PC-9 (cell line): ENCODE measurements at regions of chr6 and their contacts with region 1.

Region 1: DNA sequence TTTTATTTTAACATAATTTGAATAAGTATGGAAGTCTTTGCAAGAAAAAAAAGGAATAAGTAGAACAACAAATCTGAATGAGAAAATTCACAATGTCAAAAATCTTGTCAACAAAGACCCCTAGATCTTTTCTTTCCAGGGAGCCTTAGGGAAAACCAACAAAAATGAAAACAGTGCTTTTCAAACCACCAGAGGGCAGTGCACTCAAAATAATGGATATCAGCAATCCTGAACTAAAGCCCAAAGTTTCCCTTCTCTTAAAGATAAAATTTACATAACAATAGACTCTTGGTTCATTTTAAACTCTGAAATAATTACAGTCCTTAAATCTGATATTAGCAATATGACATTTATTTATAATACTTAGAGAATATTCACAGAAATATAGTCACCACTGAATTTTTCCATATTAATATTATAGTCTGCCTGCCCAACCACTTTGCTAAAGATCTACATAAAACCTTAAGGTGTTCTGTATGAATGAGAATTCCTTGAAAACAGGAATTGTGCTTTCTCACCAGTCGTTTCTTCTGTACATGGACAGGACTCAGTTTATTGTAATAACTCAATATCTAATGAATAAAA is 105.3 kb upstream of the BMP5 start:
- DNase-seq: peak in 1 of 2 experiments; percentile 24
- H3K4me3 ChIP-seq: no peak overlapping the region
- H3K27ac ChIP-seq: no peak overlapping the region
- H3K4me1 ChIP-seq: no peaks in the 10 kb centered on the region
- H3K27me3 ChIP-seq: no peaks in the 10 kb centered on the region
- CTCF ChIP-seq: peak; percentile 89

Region 2: GRCh38 chr6:55941702-55942101 is 39.0 kb before region 1 on chr6:
- CTCF ChIA-PET with region 1: no interaction called
- POLR2A ChIA-PET with region 1: no interaction called
- intact Hi-C with region 1: no loop called
- DNase-seq: no peak
- H3K4me3 ChIP-seq: no peak overlapping the region
- H3K27ac ChIP-seq: no peak overlapping the region
- H3K4me1 ChIP-seq: no peaks in the 10 kb centered on the region
- H3K27me3 ChIP-seq: no peaks in the 10 kb centered on the region
- CTCF ChIP-seq: no peak; the same call in 1 of the 2 replicates

Region 3: DNA sequence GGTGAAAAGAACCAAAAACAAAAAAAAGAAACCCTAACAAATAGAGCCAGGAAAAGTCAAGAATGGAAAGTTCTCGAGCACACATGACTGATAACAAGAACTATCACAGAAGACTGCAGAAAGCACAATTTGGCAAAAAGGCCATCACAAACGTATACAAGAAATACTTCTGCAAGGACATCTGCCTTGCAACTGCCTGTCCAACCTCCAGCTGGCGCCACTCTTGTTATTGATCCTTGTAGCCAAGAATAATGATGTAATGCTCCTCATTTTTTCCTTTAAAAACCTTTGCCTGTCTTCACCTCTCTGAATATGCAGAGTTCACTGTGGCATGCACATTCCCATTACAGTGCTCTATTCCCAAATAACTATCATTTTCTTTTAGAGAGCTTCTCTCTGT is 17.4 kb before region 1 on chr6:
- CTCF ChIA-PET with region 1: no interaction called
- POLR2A ChIA-PET with region 1: no interaction called
- intact Hi-C with region 1: no loop called
- DNase-seq: no peak
- H3K4me3 ChIP-seq: no peak overlapping the region
- H3K27ac ChIP-seq: no peak overlapping the region
- H3K4me1 ChIP-seq: no peaks in the 10 kb centered on the region
- H3K27me3 ChIP-seq: no peaks in the 10 kb centered on the region
- CTCF ChIP-seq: no peak; the same call in 1 of the 2 replicates

Region 4: DNA sequence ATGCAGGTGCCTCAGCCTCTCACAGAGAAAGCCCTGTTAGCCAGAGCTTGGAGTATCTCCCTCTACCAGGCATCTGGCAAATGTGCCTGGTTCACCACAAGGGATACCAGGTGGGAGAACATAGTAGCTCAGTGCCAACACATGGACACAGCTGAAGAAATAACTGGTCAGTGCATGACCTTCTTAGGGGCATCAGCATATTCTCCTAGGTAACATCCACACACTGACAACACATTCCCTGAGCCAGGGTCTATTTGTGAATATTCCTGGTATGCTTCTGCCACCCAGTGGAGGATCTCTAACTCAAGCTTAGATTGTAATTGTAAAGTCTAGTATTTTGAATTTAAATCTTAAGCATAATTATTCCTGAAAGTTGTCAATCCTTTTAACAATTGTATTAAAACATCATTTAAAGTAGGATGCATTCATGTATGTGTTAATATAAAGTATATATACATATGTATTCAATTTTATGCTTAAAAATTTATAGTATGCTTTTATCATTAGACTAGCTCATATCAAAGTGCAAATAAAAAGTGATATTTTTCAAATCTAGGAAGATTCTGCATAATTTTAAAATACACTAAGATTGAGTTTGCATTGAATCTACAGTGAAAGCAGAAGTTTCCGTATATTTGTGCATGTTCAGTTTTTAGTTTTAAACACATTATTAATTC is 311.9 kb after region 1 on chr6:
- CTCF ChIA-PET with region 1: interaction called, 4 read pairs
- POLR2A ChIA-PET with region 1: no interaction called
- intact Hi-C with region 1: loop called (anchors 1 kb)
- DNase-seq: peak in 1 of 2 experiments; percentile 40
- H3K4me3 ChIP-seq: no peak overlapping the region
- H3K27ac ChIP-seq: no peak overlapping the region
- H3K4me1 ChIP-seq: peaks cover 5% of the 10 kb centered on the region
- H3K27me3 ChIP-seq: no peaks in the 10 kb centered on the region
- CTCF ChIP-seq: peak; percentile 79

Region 5: GRCh38 chr6:56484669-56485068 is 503.9 kb after region 1 on chr6:
- CTCF ChIA-PET with region 1: no interaction called
- POLR2A ChIA-PET with region 1: no interaction called
- intact Hi-C with region 1: no loop called
- DNase-seq: no peak
- H3K4me3 ChIP-seq: no peak overlapping the region
- H3K27ac ChIP-seq: no peak overlapping the region
- H3K4me1 ChIP-seq: no peaks in the 10 kb centered on the region
- H3K27me3 ChIP-seq: no peaks in the 10 kb centered on the region
- CTCF ChIP-seq: no peak

Region 6: GRCh38 chr6:56570413-56571359 is 590.0 kb after region 1 on chr6:
- CTCF ChIA-PET with region 1: no interaction called
- POLR2A ChIA-PET with region 1: no interaction called
- intact Hi-C with region 1: loop called (anchors 10 kb)
- DNase-seq: no peak
- H3K4me3 ChIP-seq: no peak overlapping the region
- H3K27ac ChIP-seq: no peak overlapping the region
- H3K4me1 ChIP-seq: no peaks in the 10 kb centered on the region
- H3K27me3 ChIP-seq: no peaks in the 10 kb centered on the region
- CTCF ChIP-seq: peak; percentile 71